A673 (cell line): ENCODE measurements at regions of chr17 and their contacts with region 1.

Region 1: DNA sequence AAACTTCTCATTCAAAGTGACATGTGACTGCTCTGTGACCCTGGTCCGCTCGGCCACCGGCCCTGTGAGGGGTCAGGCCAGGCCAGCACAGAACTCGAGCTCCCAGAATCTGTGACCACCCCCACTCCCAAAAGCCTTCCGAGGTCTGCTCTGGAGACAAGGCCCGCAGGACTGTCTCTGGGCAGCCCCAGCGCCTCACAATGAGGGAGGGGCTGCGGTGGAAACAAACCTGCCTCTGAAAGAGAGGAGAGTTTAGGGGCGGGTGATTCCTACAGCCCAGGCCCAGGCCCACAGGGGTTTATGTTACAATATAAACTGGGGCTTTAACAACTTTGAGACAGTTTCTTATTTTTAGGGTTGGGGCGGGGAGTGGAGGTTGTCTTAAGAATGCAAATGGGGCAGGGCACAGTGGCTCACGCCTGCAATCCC is 19.9 kb downstream of the IGFBP4 start:
- DNase-seq: no peak
- H3K4me3 ChIP-seq: no peak overlapping the region
- H3K27ac ChIP-seq: no peak overlapping the region
- H3K4me1 ChIP-seq: peaks cover 5% of the 10 kb centered on the region
- H3K27me3 ChIP-seq: no peaks in the 10 kb centered on the region
- CTCF ChIP-seq: no peak

Region 2: GRCh38 chr17:40317880-40318829 is 145.0 kb before region 1 on chr17:
- CTCF ChIA-PET with region 1: interaction called, 12 read pairs
- POLR2A ChIA-PET with region 1: no interaction called
- intact Hi-C with region 1: no loop called
- DNase-seq: peak; percentile 94
- H3K4me3 ChIP-seq: peak overlapping the region; percentile 71
- H3K27ac ChIP-seq: peak overlapping the region; percentile 78
- H3K4me1 ChIP-seq: peaks cover 51% of the 10 kb centered on the region
- H3K27me3 ChIP-seq: no peaks in the 10 kb centered on the region
- CTCF ChIP-seq: no peak

Region 3: DNA sequence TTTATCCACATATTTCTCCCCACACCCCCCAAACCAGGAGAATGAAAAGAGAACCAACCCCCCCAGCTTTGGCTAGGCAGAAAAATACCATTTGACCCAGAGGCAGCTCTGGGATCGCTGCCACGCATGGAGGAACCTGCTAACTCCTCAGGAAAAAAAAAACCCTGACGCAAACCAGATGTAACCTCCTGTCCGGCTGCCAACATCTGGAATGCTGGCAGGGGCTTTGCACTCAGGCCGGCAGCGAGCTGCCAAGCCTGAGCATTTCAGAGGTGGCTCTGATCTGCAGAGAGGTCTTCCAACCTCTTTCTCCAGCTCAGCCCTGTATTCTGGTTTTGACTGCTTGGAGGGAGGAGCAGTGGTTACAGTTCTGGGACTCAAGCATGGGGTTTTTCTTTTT is 11.7 kb before region 1 on chr17:
- CTCF ChIA-PET with region 1: no interaction called
- POLR2A ChIA-PET with region 1: interaction called, 15 read pairs
- intact Hi-C with region 1: no loop called
- DNase-seq: no peak
- H3K4me3 ChIP-seq: no peak overlapping the region
- H3K27ac ChIP-seq: no peak overlapping the region
- H3K4me1 ChIP-seq: no peaks in the 10 kb centered on the region
- H3K27me3 ChIP-seq: no peaks in the 10 kb centered on the region
- CTCF ChIP-seq: no peak

Region 4: GRCh38 chr17:40763752-40764151 is 300.6 kb after region 1 on chr17:
- CTCF ChIA-PET with region 1: no interaction called
- POLR2A ChIA-PET with region 1: no interaction called
- intact Hi-C with region 1: no loop called
- DNase-seq: no peak
- H3K4me3 ChIP-seq: no peak overlapping the region
- H3K27ac ChIP-seq: no peak overlapping the region
- H3K4me1 ChIP-seq: no peaks in the 10 kb centered on the region
- H3K27me3 ChIP-seq: no peaks in the 10 kb centered on the region
- CTCF ChIP-seq: no peak